ENCODE measurements at regions of chr9 and their contacts with region 1.

Region 1: GRCh38 chr9:72022841-72023240 is 37.6 kb downstream of the C9orf57 start:
- DNase-seq: peak; percentile 85
- ATAC-seq: peak; percentile 84
- H3K4me3 ChIP-seq: no peak overlapping the region
- H3K27ac ChIP-seq: no peak overlapping the region
- H3K4me1 ChIP-seq: no peaks in the 10 kb centered on the region
- H3K27me3 ChIP-seq: no peaks in the 10 kb centered on the region
- CTCF ChIP-seq: no peak
- POLR2A ChIP-seq: no peak
- RAD21 ChIP-seq: no peak

Region 2: GRCh38 chr9:71285191-71285656 is 737.6 kb before region 1 on chr9:
- CTCF ChIA-PET with region 1: no interaction called
- POLR2A ChIA-PET with region 1: no interaction called
- dilution Hi-C with region 1: no loop called
- in situ Hi-C with region 1: no loop called
- intact Hi-C with region 1: loop called (anchors 5 kb)
- DNase-seq: peak; percentile 54
- ATAC-seq: peak; percentile 91
- H3K4me3 ChIP-seq: no peak overlapping the region
- H3K27ac ChIP-seq: no peak overlapping the region
- H3K4me1 ChIP-seq: no peaks in the 10 kb centered on the region
- H3K27me3 ChIP-seq: no peaks in the 10 kb centered on the region
- CTCF ChIP-seq: peak; percentile 82
- POLR2A ChIP-seq: no peak
- RAD21 ChIP-seq: peak; percentile 77

Region 3: GRCh38 chr9:71604197-71605063 is 418.4 kb before region 1 on chr9:
- CTCF ChIA-PET with region 1: interaction called, 6 read pairs
- POLR2A ChIA-PET with region 1: no interaction called
- dilution Hi-C with region 1: no loop called
- in situ Hi-C with region 1: loop called (anchors 10 kb)
- intact Hi-C with region 1: loop called (anchors 2 kb)
- DNase-seq: peak; percentile 70
- ATAC-seq: peak; percentile 92
- H3K4me3 ChIP-seq: no peak overlapping the region
- H3K27ac ChIP-seq: no peak overlapping the region
- H3K4me1 ChIP-seq: no peaks in the 10 kb centered on the region
- H3K27me3 ChIP-seq: no peaks in the 10 kb centered on the region
- CTCF ChIP-seq: peak; percentile 83
- POLR2A ChIP-seq: no peak
- RAD21 ChIP-seq: peak; percentile 79

Region 4: GRCh38 chr9:71801826-71802225 is 221.0 kb before region 1 on chr9:
- CTCF ChIA-PET with region 1: interaction called, 35 read pairs
- POLR2A ChIA-PET with region 1: no interaction called
- dilution Hi-C with region 1: no loop called
- in situ Hi-C with region 1: loop called (anchors 5 kb)
- intact Hi-C with region 1: loop called (anchors 1 kb)
- DNase-seq: no peak
- ATAC-seq: no peak
- H3K4me3 ChIP-seq: no peak overlapping the region
- H3K27ac ChIP-seq: no peak overlapping the region
- H3K4me1 ChIP-seq: no peaks in the 10 kb centered on the region
- H3K27me3 ChIP-seq: peaks cover 2% of the 10 kb centered on the region; the same call in 1 of the 2 replicates
- CTCF ChIP-seq: no peak
- POLR2A ChIP-seq: no peak
- RAD21 ChIP-seq: no peak

Region 5: DNA sequence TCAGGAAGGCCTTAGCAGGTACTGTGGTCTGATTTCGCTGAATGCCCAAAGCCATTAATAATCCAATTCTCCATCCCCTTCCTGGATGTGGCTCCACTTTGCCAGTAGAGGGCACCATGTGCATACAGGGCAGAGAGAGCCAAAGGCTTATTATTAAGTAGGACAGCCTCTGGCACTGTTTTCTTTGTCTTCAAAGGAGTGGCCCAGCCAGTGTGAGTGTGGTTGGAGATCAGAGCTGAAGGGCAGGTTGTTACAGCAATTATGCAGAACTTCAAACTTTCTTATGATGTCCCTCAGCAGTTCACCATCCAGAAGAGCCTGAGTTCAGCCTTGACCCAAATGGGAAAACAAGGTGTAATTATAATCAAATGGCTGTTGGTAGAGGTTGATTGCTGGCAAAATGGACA is 215.9 kb before region 1 on chr9:
- CTCF ChIA-PET with region 1: interaction called, 35 read pairs
- POLR2A ChIA-PET with region 1: no interaction called
- dilution Hi-C with region 1: no loop called
- in situ Hi-C with region 1: loop called (anchors 5 kb)
- intact Hi-C with region 1: loop called (anchors 1 kb)
- DNase-seq: peak; percentile 67
- ATAC-seq: peak; percentile 98
- H3K4me3 ChIP-seq: no peak overlapping the region
- H3K27ac ChIP-seq: no peak overlapping the region
- H3K4me1 ChIP-seq: no peaks in the 10 kb centered on the region
- H3K27me3 ChIP-seq: peaks cover under 1% of the 10 kb centered on the region; the same call in 1 of the 2 replicates
- CTCF ChIP-seq: peak; percentile 91
- POLR2A ChIP-seq: no peak
- RAD21 ChIP-seq: peak; percentile 91

Region 6: DNA sequence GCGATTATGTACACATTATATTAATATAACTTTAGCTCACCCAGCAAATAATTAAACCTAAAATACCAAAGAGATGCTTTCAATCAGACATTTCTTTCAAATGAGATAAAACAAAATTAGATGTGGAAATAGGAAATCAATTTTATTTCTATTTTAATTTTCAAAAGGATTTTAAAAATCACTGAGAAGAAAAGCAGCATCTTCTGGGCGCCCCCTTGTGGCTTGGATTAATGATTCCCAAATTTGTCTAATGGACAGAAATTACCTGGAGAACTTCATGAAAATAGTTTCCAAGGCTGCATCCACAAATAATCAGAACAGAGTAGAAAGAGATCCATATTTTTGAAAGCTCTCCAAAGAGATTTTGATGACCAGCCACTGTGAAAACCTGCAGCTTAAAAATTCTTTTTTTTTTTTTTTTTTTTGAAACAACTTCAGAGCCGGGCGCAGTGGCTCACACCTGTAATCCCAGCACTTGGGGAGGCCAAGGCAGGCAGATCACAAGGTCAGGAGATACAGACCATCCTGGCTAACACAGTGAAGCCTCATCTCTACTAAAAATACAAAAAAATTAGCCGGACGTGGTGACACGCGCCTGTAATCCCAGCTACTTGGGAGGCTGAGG is 203.6 kb before region 1 on chr9:
- CTCF ChIA-PET with region 1: interaction called, 17 read pairs
- POLR2A ChIA-PET with region 1: no interaction called
- dilution Hi-C with region 1: no loop called
- in situ Hi-C with region 1: loop called (anchors 10 kb)
- intact Hi-C with region 1: no loop called
- DNase-seq: peak; percentile 39
- ATAC-seq: no peak
- H3K4me3 ChIP-seq: no peak overlapping the region
- H3K27ac ChIP-seq: no peak overlapping the region
- H3K4me1 ChIP-seq: no peaks in the 10 kb centered on the region
- H3K27me3 ChIP-seq: no peaks in the 10 kb centered on the region; the same call in none of the 2 replicates
- CTCF ChIP-seq: peak; percentile 81
- POLR2A ChIP-seq: no peak
- RAD21 ChIP-seq: peak; percentile 64

Region 7: DNA sequence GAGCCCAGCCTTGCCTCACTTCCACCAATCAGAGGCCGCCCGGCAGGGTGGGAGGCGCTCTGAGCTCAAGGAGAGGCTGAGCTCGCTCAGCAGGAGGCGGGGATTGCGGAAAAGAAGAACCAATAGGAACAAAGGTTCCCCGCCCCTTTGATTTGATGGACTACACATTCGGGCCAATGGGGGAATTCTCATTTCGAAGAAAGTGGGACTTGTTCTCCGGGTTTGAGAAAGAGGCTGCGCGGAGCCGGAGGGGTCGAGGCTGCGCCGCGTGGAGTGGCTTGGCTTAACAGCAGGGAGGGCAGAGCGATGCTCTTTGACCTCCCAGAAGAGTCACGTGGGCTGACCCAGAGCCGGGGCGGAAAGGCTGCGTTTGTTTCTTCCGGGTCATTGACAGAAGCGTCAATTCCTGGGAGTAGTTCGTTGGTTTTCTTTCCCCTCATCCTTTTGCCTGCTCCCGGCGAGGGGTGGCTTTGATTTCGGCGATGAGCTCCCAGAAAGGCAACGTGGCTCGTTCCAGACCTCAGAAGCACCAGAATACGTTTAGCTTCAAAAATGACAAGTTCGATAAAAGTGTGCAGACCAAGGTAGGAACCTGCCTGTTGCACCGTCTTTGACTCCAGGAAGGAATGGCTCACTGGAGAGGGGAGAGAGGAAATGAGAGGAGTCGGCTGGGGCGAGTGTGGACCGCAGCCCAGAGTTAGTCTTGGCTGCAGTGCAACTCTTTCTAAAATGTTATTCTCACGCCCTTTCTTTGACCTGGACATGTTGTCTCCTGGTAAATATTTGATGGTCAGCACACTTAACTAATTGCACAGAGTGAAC is 111.4 kb before region 1 on chr9 and contains the start of gene C9orf85:
- CTCF ChIA-PET with region 1: interaction called, 8 read pairs
- POLR2A ChIA-PET with region 1: no interaction called
- dilution Hi-C with region 1: no loop called
- in situ Hi-C with region 1: no loop called
- intact Hi-C with region 1: loop called (anchors 1 kb)
- DNase-seq: peak; percentile 99
- ATAC-seq: peak; percentile 95
- H3K4me3 ChIP-seq: peak within 1 kb of the TSS; percentile 78
- H3K27ac ChIP-seq: peak within 1 kb of the TSS; percentile 88
- H3K4me1 ChIP-seq: peaks cover 2% of the 10 kb centered on the region; the same call in 1 of the 2 replicates
- H3K27me3 ChIP-seq: no peaks in the 10 kb centered on the region
- CTCF ChIP-seq: no peak
- POLR2A ChIP-seq: no peak
- RAD21 ChIP-seq: no peak
- total RNA-seq, gene C9orf85: 4.3 and 10.6 TPM in 2 replicates

Region 8: DNA sequence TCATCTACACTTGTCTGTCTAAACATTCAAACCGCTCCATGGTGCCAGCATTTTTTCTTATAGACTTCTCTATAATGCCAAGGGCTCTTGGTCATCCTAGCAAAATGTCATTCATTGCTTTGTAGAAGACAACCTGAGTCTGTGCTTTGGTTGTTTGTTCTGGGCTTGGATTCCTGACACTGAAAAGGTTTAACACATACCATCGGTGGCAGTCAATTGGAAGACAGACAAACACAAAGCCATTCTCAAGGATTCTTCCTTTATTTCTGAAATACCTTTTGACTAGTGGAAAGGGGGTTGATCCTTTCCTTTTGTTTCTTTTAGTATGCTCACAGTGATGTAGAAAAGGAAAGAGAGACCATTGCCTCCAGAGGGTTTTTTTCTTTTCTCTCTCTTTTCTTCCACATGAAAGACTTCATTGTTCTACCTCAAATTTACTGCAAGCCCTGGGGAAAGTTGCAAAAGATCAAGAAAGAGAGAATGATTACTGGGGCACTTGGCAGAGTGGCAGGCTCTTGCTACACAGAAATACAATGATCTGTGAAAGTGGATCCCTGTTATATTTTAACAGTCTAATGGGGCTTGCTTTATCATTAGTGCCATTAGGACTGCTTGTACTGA is 432.1 kb after region 1 on chr9:
- CTCF ChIA-PET with region 1: no interaction called
- POLR2A ChIA-PET with region 1: no interaction called
- dilution Hi-C with region 1: no loop called
- in situ Hi-C with region 1: no loop called
- intact Hi-C with region 1: no loop called
- DNase-seq: no peak
- ATAC-seq: no peak; the same call in 1 of the 2 replicates
- H3K4me3 ChIP-seq: no peak overlapping the region
- H3K27ac ChIP-seq: no peak overlapping the region
- H3K4me1 ChIP-seq: no peaks in the 10 kb centered on the region
- H3K27me3 ChIP-seq: no peaks in the 10 kb centered on the region
- CTCF ChIP-seq: no peak
- POLR2A ChIP-seq: no peak
- RAD21 ChIP-seq: no peak

Measured in IMR-90 (cell line).